AG04449 (cell line): ENCODE measurements at regions of chr12 and their contacts with region 1.

Region 1: GRCh38 chr12:67355578-67356379 is 86.6 kb downstream of the CAND1 start:
- DNase-seq: no peak
- H3K4me3 ChIP-seq: no peak overlapping the region
- CTCF ChIP-seq: peak; percentile 18

Region 2: DNA sequence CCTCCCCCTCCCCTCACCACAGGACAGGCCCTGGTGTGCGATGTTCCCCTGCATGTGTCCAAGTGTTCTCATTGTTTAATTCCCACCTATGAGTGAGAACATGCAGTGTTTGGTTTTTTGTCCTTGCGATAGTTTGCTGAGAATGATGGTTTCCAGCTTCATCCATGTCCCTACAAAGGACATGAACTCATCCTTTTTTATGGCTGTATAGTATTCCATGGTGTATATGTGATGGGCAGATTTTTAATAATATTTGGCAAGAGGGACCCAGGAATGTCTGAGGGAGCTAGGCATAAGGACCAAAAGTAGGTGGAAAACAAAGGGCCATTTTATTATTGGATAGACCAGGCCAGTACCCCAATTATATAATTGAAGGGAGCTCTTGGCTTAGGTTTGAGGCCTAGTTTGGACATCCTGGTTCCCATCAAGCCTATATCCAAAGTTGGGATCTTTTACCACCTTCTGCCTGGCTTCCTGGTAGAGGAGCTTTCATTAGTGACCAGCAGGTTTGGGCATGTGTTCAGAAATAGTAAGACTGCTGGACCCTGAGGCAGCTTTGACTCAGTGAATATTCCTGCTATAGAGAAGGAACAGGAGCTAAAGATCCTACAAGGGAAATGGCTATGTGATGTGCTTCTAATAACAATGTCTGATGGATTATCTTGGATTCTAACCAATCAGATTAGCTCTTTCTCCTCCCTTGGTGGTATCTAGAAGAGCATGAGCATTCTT is 10.6 kb before region 1 on chr12:
- CTCF ChIA-PET with region 1: interaction called, 14 read pairs
- POLR2A ChIA-PET with region 1: no interaction called
- DNase-seq: no peak
- H3K4me3 ChIP-seq: no peak overlapping the region
- CTCF ChIP-seq: no peak

Region 3: DNA sequence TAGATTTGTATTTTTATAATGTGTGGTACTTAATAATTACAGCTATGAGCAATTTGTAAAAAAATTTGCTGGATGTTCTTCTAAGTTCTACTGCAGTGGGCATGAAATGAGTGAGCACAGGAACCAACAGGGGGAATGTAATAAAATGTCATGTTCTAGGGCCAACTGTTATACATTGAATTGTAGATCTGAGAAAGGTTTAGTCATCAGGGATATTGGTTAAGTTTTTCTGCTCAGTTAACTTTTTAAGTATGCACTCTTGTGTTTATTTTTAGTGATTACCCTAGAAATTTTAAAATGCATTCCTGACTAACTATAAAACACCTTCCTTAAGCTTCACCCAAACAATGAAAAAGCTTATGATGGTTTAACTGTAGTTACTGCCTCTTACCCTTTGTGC is 15.2 kb after region 1 on chr12:
- CTCF ChIA-PET with region 1: interaction called, 12 read pairs
- POLR2A ChIA-PET with region 1: interaction called, 5 read pairs
- DNase-seq: no peak
- H3K4me3 ChIP-seq: no peak overlapping the region
- CTCF ChIP-seq: no peak

Region 4: DNA sequence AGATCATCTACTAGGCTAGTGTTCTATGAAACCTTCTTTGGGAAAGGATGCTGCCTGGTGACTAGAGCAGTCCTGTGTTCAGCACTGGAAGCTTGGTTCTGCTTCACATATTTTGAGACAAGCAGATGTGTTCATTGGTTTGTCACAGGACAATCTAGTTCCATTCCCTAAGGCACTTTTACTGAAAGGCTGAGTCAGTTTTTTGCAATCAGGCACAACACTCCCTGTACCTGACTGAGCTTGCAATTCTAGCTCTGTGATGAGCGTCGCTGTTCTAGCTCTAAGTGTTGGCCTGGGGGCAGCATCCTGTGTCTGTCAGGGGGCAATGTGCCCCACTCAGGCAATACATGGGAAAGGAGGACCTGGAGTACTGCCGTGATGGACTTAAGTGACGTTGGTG is 57.8 kb after region 1 on chr12:
- CTCF ChIA-PET with region 1: interaction called, 38 read pairs
- POLR2A ChIA-PET with region 1: no interaction called
- DNase-seq: no peak
- H3K4me3 ChIP-seq: no peak overlapping the region
- CTCF ChIP-seq: no peak

Region 5: DNA sequence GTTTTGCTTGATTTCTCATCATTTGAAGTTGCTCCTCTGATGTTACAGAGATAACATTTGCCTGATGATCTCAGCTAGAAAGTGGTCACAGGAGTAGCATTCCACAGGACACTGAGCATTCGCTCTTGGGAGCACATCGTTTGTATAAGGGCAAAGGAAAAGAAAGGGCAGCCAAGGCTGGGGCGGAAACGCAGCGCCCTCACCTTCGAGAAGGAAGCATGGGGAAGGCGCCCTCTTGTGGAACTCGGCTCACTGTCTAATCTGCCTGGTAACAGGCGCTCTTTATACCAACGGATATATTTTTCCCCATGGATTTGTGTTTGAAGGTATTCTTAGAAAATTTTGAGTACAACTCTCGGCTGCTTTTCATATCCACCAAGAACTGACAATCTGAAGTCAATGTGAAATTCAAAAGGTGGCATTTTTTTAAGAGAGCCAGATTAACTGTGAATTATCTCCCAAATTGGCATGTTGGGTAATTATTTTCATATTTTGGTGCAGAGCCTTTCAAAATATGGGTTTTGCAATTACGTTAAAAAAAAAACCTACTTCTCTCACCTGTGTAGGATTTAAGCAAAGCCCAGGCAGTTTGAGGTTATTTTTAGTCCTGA is 86.1 kb after region 1 on chr12:
- CTCF ChIA-PET with region 1: interaction called, 42 read pairs
- POLR2A ChIA-PET with region 1: no interaction called
- DNase-seq: no peak
- H3K4me3 ChIP-seq: no peak overlapping the region
- CTCF ChIP-seq: peak; percentile 82

Region 6: DNA sequence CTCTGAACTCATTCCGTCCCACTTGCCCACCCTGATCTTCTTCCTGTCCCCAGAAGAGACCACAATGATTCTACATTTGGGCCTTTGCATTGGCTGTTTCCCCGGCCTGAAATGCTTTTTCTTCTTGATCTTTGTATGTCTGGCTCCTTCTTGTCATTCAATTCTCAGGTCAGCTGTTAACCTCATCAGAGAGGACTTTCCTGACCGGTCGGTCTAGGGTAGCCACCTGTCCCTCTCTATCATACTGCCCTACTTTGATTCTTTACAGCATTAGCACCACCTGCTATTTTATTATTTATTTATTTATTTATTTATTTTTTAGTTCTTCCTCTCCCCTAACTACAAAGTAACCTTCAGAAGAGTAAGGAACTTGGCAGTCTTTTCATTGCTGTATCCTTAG is 377.1 kb after region 1 on chr12:
- CTCF ChIA-PET with region 1: no interaction called
- POLR2A ChIA-PET with region 1: no interaction called
- DNase-seq: no peak
- H3K4me3 ChIP-seq: no peak overlapping the region
- CTCF ChIP-seq: no peak

Region 7: DNA sequence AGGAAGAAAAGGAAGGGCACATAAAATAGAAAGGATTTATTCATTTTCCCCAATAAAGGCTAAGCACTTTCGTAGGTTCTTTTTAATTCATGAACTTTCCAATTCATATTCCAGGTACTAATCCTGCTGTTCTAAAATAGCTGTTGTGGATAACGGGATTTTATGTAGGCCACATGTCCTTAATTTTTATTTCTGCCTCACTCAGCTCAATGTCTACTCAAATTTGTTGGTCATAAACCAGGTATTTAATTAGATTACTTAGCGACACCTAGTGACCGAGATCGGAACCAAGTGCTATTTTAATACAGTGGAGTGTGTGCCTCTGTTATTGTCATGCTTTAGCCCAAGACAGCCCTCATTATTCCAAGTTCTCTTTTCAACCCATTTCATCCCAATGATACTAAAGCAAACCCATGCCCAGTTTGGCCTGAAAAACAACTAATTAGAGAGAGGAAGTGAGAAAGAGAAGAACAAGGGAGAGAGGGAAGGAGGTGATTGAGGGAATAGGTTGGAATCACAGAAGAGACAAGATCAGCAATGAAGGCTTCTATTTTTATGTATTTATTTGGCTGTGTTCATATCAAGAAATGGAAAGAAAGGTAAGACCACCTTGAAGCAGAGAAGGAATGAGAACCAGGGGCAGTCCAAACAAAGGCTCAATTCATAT is 587.6 kb after region 1 on chr12:
- CTCF ChIA-PET with region 1: interaction called, 51 read pairs
- POLR2A ChIA-PET with region 1: interaction called, 4 read pairs
- DNase-seq: peak; percentile 31
- H3K4me3 ChIP-seq: no peak overlapping the region
- CTCF ChIP-seq: peak; percentile 49